CD4-positive, alpha-beta memory T cell (primary cell): ENCODE measurements at regions of chr3 and their contacts with region 1.

Region 1: GRCh38 chr3:66816090-66816761 is 181.9 kb upstream of the KBTBD8 start:
- DNase-seq: peak in 4 of 5 donors; percentile 60 to 69 (median 64)
- H3K4me3 ChIP-seq: no peak overlapping the region
- H3K4me3 Mint-ChIP-seq: no peak overlapping the region
- H3K27ac ChIP-seq: no peak overlapping the region
- H3K27ac Mint-ChIP-seq: no peak overlapping the region
- H3K4me1 ChIP-seq: no peaks in the 10 kb centered on the region
- H3K4me1 Mint-ChIP-seq: peaks cover 0 to 2% (median under 1%) of the 10 kb centered on the region in 4 donors
- H3K27me3 ChIP-seq: no peaks in the 10 kb centered on the region
- H3K27me3 Mint-ChIP-seq: peaks cover 0 to 9% of the 10 kb centered on the region in 2 donors

Region 2: GRCh38 chr3:66276705-66277274 is 539.4 kb before region 1 on chr3:
- CTCF ChIA-PET with region 1: interaction called, 42 read pairs
- POLR2A ChIA-PET with region 1: no interaction called
- intact Hi-C with region 1: loop called (anchors 1 kb)
- DNase-seq: peak; percentile 71 to 75 (median 73)
- H3K4me3 ChIP-seq: no peak overlapping the region
- H3K4me3 Mint-ChIP-seq: no peak overlapping the region
- H3K27ac ChIP-seq: no peak overlapping the region
- H3K27ac Mint-ChIP-seq: peak overlapping the region; percentile 6 to 86 (median 71)
- H3K4me1 ChIP-seq: peaks cover 34% of the 10 kb centered on the region
- H3K4me1 Mint-ChIP-seq: peaks cover 25 to 45% (median 34%) of the 10 kb centered on the region in 4 donors
- H3K27me3 ChIP-seq: no peaks in the 10 kb centered on the region
- H3K27me3 Mint-ChIP-seq: no peaks in the 10 kb centered on the region

Region 3: DNA sequence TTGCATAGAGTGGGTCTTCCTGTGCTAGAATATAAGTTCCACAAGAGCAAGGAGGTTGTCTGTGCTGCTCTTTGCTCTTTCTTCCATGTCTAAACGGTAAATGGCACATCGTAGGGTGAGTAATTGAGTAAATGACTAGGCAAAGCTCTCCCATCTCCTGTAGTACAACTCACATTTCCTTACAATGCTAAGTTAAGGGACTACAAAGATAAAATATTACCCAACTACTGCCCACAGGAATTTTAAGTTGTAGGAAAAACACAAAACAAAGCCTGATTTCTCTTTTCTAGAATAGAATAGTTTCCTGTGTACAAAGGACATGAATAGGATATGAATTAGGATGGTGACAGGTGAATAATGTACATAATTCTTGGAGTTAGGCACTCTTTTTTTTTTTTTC is 295.5 kb before region 1 on chr3:
- CTCF ChIA-PET with region 1: no interaction called
- POLR2A ChIA-PET with region 1: no interaction called
- intact Hi-C with region 1: no loop called
- DNase-seq: no peak
- H3K4me3 ChIP-seq: no peak overlapping the region
- H3K4me3 Mint-ChIP-seq: no peak overlapping the region
- H3K27ac ChIP-seq: no peak overlapping the region
- H3K27ac Mint-ChIP-seq: no peak overlapping the region
- H3K4me1 ChIP-seq: no peaks in the 10 kb centered on the region
- H3K4me1 Mint-ChIP-seq: peaks cover 0 to 5% (median 2%) of the 10 kb centered on the region in 4 donors
- H3K27me3 ChIP-seq: no peaks in the 10 kb centered on the region
- H3K27me3 Mint-ChIP-seq: peaks cover 5% of the 10 kb centered on the region in 2 donors

Region 4: GRCh38 chr3:66803206-66803605 is 13.0 kb before region 1 on chr3:
- CTCF ChIA-PET with region 1: interaction called, 28 read pairs
- POLR2A ChIA-PET with region 1: no interaction called
- intact Hi-C with region 1: no loop called
- DNase-seq: no peak
- H3K4me3 ChIP-seq: no peak overlapping the region
- H3K4me3 Mint-ChIP-seq: peak overlapping the region in 1 of 8 donors; percentile 18
- H3K27ac ChIP-seq: no peak overlapping the region
- H3K27ac Mint-ChIP-seq: peak overlapping the region in 1 of 7 donors; percentile 11
- H3K4me1 ChIP-seq: no peaks in the 10 kb centered on the region
- H3K4me1 Mint-ChIP-seq: peaks cover 2 to 11% (median 7%) of the 10 kb centered on the region in 4 donors
- H3K27me3 ChIP-seq: no peaks in the 10 kb centered on the region
- H3K27me3 Mint-ChIP-seq: peaks cover 12 to 14% of the 10 kb centered on the region in 2 donors